ENCODE measurements at regions of chr16 and their contacts with region 1.

Region 1: DNA sequence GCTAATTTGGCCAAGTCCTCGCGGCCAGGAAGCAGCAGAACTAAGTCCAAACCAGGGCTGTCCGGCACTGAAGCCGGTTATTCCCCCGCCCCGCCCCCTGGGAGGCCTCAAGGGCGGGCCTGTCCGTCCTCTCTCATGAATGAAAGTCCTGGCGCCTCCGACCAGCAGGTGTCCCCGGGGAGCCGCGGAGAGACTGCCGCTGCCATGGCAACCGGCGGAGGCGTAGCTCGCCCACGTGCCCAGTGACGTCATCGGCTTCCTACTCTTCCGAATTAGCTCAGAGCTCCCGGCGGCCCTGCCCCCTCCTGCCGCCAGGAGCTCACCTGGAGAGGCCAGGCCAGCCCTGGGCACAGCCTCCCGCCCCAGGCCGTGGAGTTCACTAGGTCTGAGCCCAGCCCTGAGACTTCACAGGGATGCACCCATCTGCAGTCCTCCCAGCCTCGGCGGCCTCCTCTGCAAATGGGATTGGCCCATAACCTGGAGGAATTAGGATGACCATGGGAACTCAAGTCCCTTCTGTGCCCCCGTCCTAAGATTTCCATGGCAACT is 1.3 kb downstream of the SPATA2L start:
- DNase-seq: peak; percentile 82
- ATAC-seq: peak; percentile 67
- H3K4me3 ChIP-seq: peak overlapping the region; percentile 83
- H3K27ac ChIP-seq: no peak overlapping the region; the same call in 1 of the 2 replicates
- H3K4me1 ChIP-seq: peaks cover 22% of the 10 kb centered on the region
- H3K27me3 ChIP-seq: no peaks in the 10 kb centered on the region
- CTCF ChIP-seq: peak; percentile 68 to 94 (median 71)
- EP300 ChIP-seq: peak; percentile 55 to 63; a peak in 2 of 4 replicates
- POLR2A ChIP-seq: no peak; the same call in none of the 2 replicates
- RAD21 ChIP-seq: peak; percentile 55

Region 2: GRCh38 chr16:89657442-89658220 is 42.5 kb before region 1 on chr16 and contains the starts of genes CHMP1A and SPATA33:
- CTCF ChIA-PET with region 1: interaction called, 11 read pairs
- POLR2A ChIA-PET with region 1: no interaction called
- RAD21 ChIA-PET with region 1: interaction called, 5 read pairs
- SMC1A ChIA-PET with region 1: interaction called, 3 read pairs
- in situ Hi-C with region 1: no loop called
- intact Hi-C with region 1: no loop called
- DNase-seq: peak; percentile 45
- ATAC-seq: peak; percentile 97
- H3K4me3 ChIP-seq: peak within 1 kb of the TSS; percentile 97
- H3K27ac ChIP-seq: peak within 1 kb of the TSS; percentile 88
- H3K4me1 ChIP-seq: peaks cover 14% of the 10 kb centered on the region
- H3K27me3 ChIP-seq: no peaks in the 10 kb centered on the region
- CTCF ChIP-seq: no peak
- EP300 ChIP-seq: 0 out of 4 replicates have a peak, but pooled peaks of 1 of the 2 experiments have one; percentile 22
- POLR2A ChIP-seq: peak; percentile 98
- RAD21 ChIP-seq: no peak
- polyA plus RNA-seq, gene CHMP1A: 1.0 to 3.8 TPM
- polyA plus RNA-seq, gene SPATA33: 1.1 to 2.9 TPM

Region 3: DNA sequence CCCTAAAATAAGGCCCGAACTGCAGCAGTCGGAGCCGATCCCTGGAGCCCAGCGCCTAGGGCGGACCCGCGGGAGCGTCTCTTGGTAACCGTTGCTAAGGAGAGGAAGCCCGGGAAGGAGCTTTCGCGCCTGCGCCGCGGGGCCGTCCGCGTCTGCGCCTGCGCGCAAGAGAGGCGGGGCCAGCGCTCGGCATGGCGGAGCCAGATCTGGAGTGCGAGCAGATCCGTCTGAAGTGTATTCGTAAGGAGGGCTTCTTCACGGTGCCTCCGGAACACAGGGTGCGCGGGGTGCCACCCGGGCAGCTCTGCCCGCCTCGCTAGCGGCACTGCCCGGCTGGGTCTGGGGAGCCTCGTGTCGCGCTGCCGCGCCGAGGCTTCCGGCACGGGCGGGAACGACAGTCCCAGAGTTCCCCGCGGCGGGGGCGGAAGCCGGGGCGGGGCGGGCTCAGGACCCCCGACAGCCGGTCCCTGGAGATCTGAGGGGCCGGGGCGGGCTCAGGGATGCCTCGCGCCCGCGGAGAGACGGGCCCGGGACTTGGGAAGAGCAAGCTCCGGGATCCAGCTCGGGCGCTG is 13.6 kb before region 1 on chr16 and contains the start of gene CDK10:
- CTCF ChIA-PET with region 1: interaction called, 12 read pairs
- POLR2A ChIA-PET with region 1: interaction called, 19 read pairs
- RAD21 ChIA-PET with region 1: interaction called, 19 read pairs
- SMC1A ChIA-PET with region 1: interaction called, 8 read pairs
- in situ Hi-C with region 1: no loop called
- intact Hi-C with region 1: no loop called
- DNase-seq: peak; percentile 61
- ATAC-seq: peak; percentile 94
- H3K4me3 ChIP-seq: peak within 1 kb of the TSS; percentile 88
- H3K27ac ChIP-seq: peak within 1 kb of the TSS; percentile 93
- H3K4me1 ChIP-seq: peaks cover 6% of the 10 kb centered on the region; the same call in 1 of the 2 replicates
- H3K27me3 ChIP-seq: no peaks in the 10 kb centered on the region
- CTCF ChIP-seq: no peak
- EP300 ChIP-seq: no peak
- POLR2A ChIP-seq: peak; percentile 90
- RAD21 ChIP-seq: no peak
- polyA plus RNA-seq, gene CDK10: 1.5 to 2.5 TPM

Region 4: DNA sequence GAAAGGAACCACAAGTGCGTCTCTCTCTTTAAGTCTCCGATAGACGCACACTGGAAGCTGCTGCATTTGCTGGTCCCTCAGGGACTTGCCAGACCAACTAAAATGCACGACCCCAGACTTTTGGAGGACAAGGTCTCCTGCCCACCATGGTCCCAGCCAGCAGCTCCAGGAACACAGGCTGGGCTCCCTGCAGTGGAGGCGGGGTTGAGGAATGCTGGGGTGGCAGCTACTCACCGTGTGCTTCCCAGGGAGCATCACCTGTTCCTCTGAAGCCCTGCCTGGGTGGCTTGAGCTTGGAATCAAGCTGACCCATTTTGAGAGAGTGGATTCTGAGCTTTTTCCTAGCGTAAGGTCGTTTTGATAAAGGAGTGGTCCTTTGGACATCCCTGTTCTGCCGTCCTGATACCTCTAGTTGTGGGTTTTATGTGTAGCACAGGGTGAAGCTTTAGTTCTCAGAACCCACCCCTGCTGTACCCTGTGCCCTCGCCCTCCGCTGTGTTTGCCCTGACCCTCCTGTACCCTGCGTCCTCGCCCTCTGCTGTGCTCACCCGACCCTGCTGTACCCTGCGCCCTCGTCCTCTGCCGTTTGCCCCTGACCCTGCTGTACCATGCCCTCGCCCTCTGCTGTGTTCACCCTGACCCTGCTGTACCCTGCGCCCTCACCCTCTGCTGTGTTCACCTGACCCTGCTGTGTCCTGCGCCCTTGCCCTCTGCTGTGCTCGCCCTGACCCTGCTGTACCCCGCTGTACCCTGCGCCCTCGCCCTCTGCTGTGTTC is 32.2 kb after region 1 on chr16:
- CTCF ChIA-PET with region 1: no interaction called
- POLR2A ChIA-PET with region 1: no interaction called
- RAD21 ChIA-PET with region 1: no interaction called
- SMC1A ChIA-PET with region 1: no interaction called
- in situ Hi-C with region 1: no loop called
- intact Hi-C with region 1: no loop called
- DNase-seq: no peak
- ATAC-seq: no peak
- H3K4me3 ChIP-seq: no peak overlapping the region
- H3K27ac ChIP-seq: no peak overlapping the region
- H3K4me1 ChIP-seq: peaks cover 3% of the 10 kb centered on the region; the same call in 1 of the 2 replicates
- H3K27me3 ChIP-seq: no peaks in the 10 kb centered on the region
- CTCF ChIP-seq: no peak
- EP300 ChIP-seq: no peak
- POLR2A ChIP-seq: peak; percentile 65
- RAD21 ChIP-seq: no peak

Region 5: GRCh38 chr16:89791278-89791995 is 91.3 kb after region 1 on chr16:
- CTCF ChIA-PET with region 1: interaction called, 82 read pairs
- POLR2A ChIA-PET with region 1: interaction called, 3 read pairs
- RAD21 ChIA-PET with region 1: interaction called, 33 read pairs
- SMC1A ChIA-PET with region 1: interaction called, 39 read pairs
- in situ Hi-C with region 1: loop called (anchors 10 kb)
- intact Hi-C with region 1: no loop called
- DNase-seq: no peak
- ATAC-seq: no peak
- H3K4me3 ChIP-seq: no peak overlapping the region
- H3K27ac ChIP-seq: no peak overlapping the region
- H3K4me1 ChIP-seq: no peaks in the 10 kb centered on the region
- H3K27me3 ChIP-seq: no peaks in the 10 kb centered on the region
- CTCF ChIP-seq: no peak
- EP300 ChIP-seq: no peak
- POLR2A ChIP-seq: no peak
- RAD21 ChIP-seq: no peak

Region 6: GRCh38 chr16:89801800-89802199 is 101.6 kb after region 1 on chr16:
- CTCF ChIA-PET with region 1: interaction called, 3 read pairs
- POLR2A ChIA-PET with region 1: no interaction called
- RAD21 ChIA-PET with region 1: no interaction called
- SMC1A ChIA-PET with region 1: no interaction called
- in situ Hi-C with region 1: loop called (anchors 10 kb)
- intact Hi-C with region 1: no loop called
- DNase-seq: no peak
- ATAC-seq: no peak
- H3K4me3 ChIP-seq: no peak overlapping the region
- H3K27ac ChIP-seq: no peak overlapping the region
- H3K4me1 ChIP-seq: no peaks in the 10 kb centered on the region
- H3K27me3 ChIP-seq: no peaks in the 10 kb centered on the region
- CTCF ChIP-seq: no peak
- EP300 ChIP-seq: no peak
- POLR2A ChIP-seq: no peak
- RAD21 ChIP-seq: no peak

Region 7: GRCh38 chr16:89873972-89874689 is 174.0 kb after region 1 on chr16:
- CTCF ChIA-PET with region 1: interaction called, 5 read pairs
- POLR2A ChIA-PET with region 1: interaction called, 20 read pairs
- RAD21 ChIA-PET with region 1: interaction called, 3 read pairs
- SMC1A ChIA-PET with region 1: no interaction called
- in situ Hi-C with region 1: no loop called
- intact Hi-C with region 1: no loop called
- DNase-seq: peak; percentile 81
- ATAC-seq: peak; percentile 79
- H3K4me3 ChIP-seq: peak overlapping the region; percentile 99
- H3K27ac ChIP-seq: peak overlapping the region; percentile 100
- H3K4me1 ChIP-seq: peaks cover 15% of the 10 kb centered on the region
- H3K27me3 ChIP-seq: no peaks in the 10 kb centered on the region
- CTCF ChIP-seq: no peak
- EP300 ChIP-seq: no peak
- POLR2A ChIP-seq: peak; percentile 5
- RAD21 ChIP-seq: no peak

Region 8: DNA sequence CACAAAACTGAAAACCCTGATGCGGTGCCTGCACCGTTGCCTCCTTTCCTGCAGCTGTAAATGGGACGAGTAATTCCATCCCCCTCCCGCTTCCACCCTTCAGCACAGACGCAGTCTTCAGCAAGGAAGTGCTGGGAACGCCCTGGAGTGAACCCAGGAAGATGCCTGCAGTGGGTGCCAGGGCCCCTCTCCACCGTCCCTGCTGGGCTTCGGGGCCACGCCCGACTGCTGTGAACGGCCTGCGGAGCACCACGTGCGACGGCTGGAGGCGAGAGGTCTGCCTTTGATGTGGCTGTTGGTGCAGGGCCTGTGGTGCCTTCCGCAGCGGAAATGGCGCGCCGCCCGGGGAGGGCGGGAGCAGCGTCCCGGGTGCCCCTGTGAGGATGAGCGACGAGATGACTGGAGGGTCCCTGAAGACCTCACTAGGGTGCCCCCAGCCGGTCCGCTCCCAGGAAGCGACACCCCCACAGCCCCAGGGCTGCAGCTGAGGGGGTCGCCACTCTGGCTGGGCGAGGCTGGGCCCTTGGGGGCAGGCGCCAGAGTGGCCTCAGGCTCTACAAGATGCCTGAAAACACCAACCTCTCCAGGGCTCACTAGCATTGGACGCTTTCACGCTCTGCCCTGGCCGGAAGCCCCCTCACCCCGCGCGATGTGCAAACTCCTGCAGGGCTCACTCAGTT is 217.7 kb after region 1 on chr16:
- CTCF ChIA-PET with region 1: no interaction called
- POLR2A ChIA-PET with region 1: no interaction called
- RAD21 ChIA-PET with region 1: no interaction called
- SMC1A ChIA-PET with region 1: interaction called, 3 read pairs
- in situ Hi-C with region 1: no loop called
- intact Hi-C with region 1: loop called (anchors 10 kb)
- DNase-seq: peak; percentile 73
- ATAC-seq: peak; percentile 95
- H3K4me3 ChIP-seq: peak overlapping the region; percentile 62
- H3K27ac ChIP-seq: peak overlapping the region; percentile 2
- H3K4me1 ChIP-seq: peaks cover 11% of the 10 kb centered on the region
- H3K27me3 ChIP-seq: peaks cover 3 to 13% of the 10 kb centered on the region in 2 experiments
- CTCF ChIP-seq: no peak
- EP300 ChIP-seq: peak in 1 of 2 experiments; percentile 60; a peak in 1 of 4 replicates
- POLR2A ChIP-seq: peak; percentile 79
- RAD21 ChIP-seq: no peak

Measured in GM12878 (cell line).